ENCODE measurements at regions of chr13 and their contacts with region 1.

Region 1: GRCh38 chr13:39777527-39778061 is 122.1 kb downstream of the COG6 start:
- DNase-seq: peak; percentile 72
- H3K4me3 Mint-ChIP-seq: peak overlapping the region; percentile 4
- H3K27ac Mint-ChIP-seq: peak overlapping the region; percentile 92
- H3K4me1 Mint-ChIP-seq: peaks cover 52% of the 10 kb centered on the region
- H3K27me3 Mint-ChIP-seq: no peaks in the 10 kb centered on the region

Region 2: DNA sequence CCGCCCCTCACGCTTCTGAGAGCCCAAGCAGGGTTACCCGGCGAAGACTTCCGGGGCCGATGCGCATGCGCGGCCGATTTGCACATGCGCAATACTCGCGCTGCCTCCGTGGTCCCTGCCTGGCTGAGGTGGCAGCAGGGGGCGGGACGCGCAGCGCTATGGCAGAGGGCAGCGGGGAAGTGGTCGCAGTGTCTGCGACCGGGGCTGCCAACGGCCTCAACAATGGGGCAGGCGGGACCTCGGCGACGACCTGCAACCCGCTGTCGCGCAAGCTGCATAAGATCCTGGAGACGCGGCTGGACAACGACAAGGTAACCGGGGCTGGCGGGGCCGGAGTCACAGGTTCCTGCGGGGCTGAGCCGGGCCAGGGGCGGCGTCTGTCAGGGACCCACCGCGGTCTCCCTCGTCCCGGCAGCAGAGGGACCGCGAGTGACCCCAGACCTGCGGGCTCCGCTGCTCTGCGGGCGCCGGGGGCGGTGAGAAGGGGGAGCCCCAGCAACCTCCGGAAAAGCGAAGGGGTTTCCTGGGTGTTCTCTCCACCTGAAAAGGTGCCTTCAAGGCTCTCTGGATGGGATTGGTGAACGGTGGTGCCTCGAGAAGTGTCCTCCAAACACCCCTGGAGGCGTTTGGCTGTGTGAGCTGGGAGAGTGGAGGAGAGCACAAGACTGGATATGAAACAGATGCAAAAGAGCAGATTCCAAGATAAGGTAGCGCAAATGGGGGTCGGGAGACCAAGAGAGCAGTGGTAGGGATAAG is 121.8 kb before region 1 on chr13 and contains the start of gene COG6:
- CTCF ChIA-PET with region 1: no interaction called
- POLR2A ChIA-PET with region 1: no interaction called
- intact Hi-C with region 1: no loop called
- DNase-seq: peak; percentile 96
- H3K4me3 Mint-ChIP-seq: peak within 1 kb of the TSS; percentile 91
- H3K27ac Mint-ChIP-seq: peak within 1 kb of the TSS; percentile 82
- H3K4me1 Mint-ChIP-seq: peaks cover 18% of the 10 kb centered on the region
- H3K27me3 Mint-ChIP-seq: no peaks in the 10 kb centered on the region
- total RNA-seq, gene COG6: 25.5 to 37.3 TPM

Region 3: DNA sequence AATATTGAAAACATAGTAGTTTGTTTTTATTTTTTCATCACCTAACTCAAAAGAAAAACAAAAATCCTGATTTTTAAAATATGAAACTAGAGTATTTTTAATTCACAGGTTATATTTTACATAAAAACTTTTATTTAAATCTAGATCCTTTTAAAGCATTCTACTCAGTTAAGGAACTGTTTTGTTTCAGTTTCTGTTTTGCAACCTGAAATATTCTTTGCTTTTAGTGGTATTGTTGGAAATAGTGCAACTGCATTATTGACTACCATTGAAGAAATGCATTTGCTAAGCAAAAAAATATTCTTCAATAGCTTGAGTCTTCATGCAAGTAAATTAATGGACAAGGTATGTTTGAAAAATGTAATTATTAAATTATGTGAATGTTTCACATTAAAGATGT is 78.3 kb before region 1 on chr13:
- CTCF ChIA-PET with region 1: no interaction called
- POLR2A ChIA-PET with region 1: no interaction called
- intact Hi-C with region 1: loop called (anchors 2 kb)
- DNase-seq: no peak
- H3K4me3 Mint-ChIP-seq: no peak overlapping the region
- H3K27ac Mint-ChIP-seq: no peak overlapping the region
- H3K4me1 Mint-ChIP-seq: peaks cover 9% of the 10 kb centered on the region
- H3K27me3 Mint-ChIP-seq: no peaks in the 10 kb centered on the region

Region 4: GRCh38 chr13:39823063-39823713 is 45.6 kb after region 1 on chr13:
- CTCF ChIA-PET with region 1: no interaction called
- POLR2A ChIA-PET with region 1: no interaction called
- intact Hi-C with region 1: no loop called
- DNase-seq: no peak
- H3K4me3 Mint-ChIP-seq: peak overlapping the region; percentile 68
- H3K27ac Mint-ChIP-seq: no peak overlapping the region
- H3K4me1 Mint-ChIP-seq: peaks cover 24% of the 10 kb centered on the region
- H3K27me3 Mint-ChIP-seq: peaks cover 3% of the 10 kb centered on the region

Region 5: GRCh38 chr13:39918837-39919236 is 141.2 kb after region 1 on chr13:
- CTCF ChIA-PET with region 1: no interaction called
- POLR2A ChIA-PET with region 1: no interaction called
- intact Hi-C with region 1: loop called (anchors 5 kb)
- DNase-seq: no peak
- H3K4me3 Mint-ChIP-seq: no peak overlapping the region
- H3K27ac Mint-ChIP-seq: no peak overlapping the region
- H3K4me1 Mint-ChIP-seq: no peaks in the 10 kb centered on the region
- H3K27me3 Mint-ChIP-seq: peaks cover 3% of the 10 kb centered on the region

Region 6: GRCh38 chr13:39942552-39943273 is 165.1 kb after region 1 on chr13:
- CTCF ChIA-PET with region 1: interaction called, 28 read pairs
- POLR2A ChIA-PET with region 1: no interaction called
- intact Hi-C with region 1: loop called (anchors 2 kb)
- DNase-seq: peak; percentile 78
- H3K4me3 Mint-ChIP-seq: no peak overlapping the region
- H3K27ac Mint-ChIP-seq: peak overlapping the region; percentile 9
- H3K4me1 Mint-ChIP-seq: peaks cover 6% of the 10 kb centered on the region
- H3K27me3 Mint-ChIP-seq: no peaks in the 10 kb centered on the region

Region 7: DNA sequence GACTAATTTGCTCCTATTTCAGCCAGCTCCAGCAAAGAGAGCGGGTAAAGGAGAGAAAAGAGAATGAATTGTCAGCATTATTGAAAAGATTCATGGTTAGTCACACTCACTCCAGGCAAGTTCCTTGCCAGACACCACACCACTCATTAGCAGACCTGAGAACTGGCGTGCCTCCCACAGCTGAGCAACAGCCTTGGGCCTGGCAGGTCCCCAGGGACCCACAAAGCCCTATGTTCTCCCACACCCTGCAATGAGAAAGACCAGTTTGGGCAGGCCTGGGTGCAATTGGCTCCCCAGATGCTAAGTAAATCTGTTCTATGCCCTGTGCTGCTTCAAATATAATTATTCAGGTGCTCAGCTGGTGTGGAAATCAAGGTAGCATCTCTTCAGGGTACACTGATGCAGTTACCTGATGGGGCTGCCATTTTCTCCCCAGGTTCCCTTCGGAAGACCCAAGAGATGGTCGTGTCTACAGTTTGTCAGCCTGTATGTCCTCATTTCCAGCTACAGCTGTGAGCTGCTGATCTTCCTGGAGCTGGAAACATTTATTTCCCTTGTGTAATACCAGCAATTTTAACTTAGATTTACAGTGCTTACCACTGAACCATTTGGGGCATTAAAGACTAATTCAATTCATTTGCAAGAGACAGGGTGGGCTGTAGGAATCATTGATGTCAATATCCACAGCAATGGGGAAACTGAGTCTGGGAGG is 282.9 kb after region 1 on chr13:
- CTCF ChIA-PET with region 1: interaction called, 3 read pairs
- POLR2A ChIA-PET with region 1: no interaction called
- intact Hi-C with region 1: loop called (anchors 2 kb)
- DNase-seq: peak; percentile 83
- H3K4me3 Mint-ChIP-seq: peak overlapping the region; percentile 42
- H3K27ac Mint-ChIP-seq: peak overlapping the region; percentile 47
- H3K4me1 Mint-ChIP-seq: peaks cover 46% of the 10 kb centered on the region
- H3K27me3 Mint-ChIP-seq: no peaks in the 10 kb centered on the region

Region 8: DNA sequence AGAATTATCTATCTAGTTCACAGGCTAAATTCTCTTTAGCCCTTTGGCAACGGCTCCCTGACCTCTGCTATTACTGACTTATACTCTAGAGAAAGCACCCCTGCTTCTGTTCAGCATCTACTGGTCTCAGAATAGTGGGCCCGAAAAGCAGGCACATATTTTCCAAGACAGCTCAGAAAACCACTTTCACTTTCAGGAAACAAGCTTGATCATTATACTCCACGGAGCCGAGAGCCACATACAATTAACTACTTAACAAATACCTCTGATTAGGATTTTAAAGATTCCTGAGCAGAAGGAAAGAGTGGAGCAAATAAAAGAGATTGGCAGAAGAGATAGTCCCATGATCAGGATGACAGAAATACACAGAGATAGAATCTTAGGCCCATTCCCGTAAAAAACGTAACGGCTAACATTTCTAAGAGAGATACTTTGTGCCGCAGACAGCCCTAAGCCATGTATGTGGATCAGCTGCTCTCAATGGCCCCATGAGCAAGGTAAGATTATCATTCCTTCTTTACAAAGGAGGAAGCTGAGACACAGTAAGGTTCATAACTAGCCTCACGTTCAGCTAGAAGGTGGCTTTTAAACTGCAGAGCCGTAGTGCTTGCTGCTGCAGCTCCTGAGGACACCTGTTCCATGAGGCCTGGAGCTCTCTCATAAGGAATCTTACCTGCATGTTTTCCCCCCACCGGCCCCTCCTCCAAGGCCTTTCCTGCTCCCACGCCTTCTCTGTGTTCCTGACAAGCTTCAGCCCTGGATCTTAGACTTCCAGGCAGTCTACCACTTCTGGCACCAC is 661.6 kb after region 1 on chr13:
- CTCF ChIA-PET with region 1: no interaction called
- POLR2A ChIA-PET with region 1: no interaction called
- intact Hi-C with region 1: loop called (anchors 5 kb)
- DNase-seq: peak; percentile 42
- H3K4me3 Mint-ChIP-seq: peak overlapping the region; percentile 59
- H3K27ac Mint-ChIP-seq: peak overlapping the region; percentile 71
- H3K4me1 Mint-ChIP-seq: peaks cover 34% of the 10 kb centered on the region
- H3K27me3 Mint-ChIP-seq: no peaks in the 10 kb centered on the region